ENCODE measurements at regions of chr2 and their contacts with region 1.

Region 1: DNA sequence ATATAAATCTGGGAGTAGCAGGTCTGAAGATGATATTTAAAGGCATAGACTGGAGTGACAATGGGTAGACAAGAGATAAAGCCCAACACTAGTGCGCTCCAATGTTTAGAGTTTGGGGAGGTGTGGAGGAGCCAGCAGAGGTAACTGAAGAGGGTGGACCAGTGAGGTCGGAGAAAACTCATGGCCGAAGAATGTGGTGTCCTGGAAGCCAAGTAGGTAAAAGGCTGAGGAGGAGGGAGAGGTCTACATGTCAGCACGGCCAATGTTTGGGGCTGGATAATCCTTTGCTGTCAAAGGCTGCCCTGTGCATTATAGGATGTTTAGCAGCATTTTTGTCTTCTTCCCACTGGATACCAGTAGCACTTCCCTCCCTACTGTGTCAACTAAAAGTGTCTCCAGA is 78.8 kb upstream of the KCNE4 start:
- DNase-seq: no peak
- ATAC-seq: no peak
- H3K4me3 ChIP-seq: no peak overlapping the region
- H3K4me1 ChIP-seq: no peaks in the 10 kb centered on the region
- CTCF ChIP-seq: no peak

Region 2: GRCh38 chr2:222844323-222844722 is 128.9 kb before region 1 on chr2:
- intact Hi-C with region 1: no loop called
- DNase-seq: peak in 1 of 3 donors; percentile 21
- ATAC-seq: peak; percentile 49
- H3K4me3 ChIP-seq: no peak overlapping the region
- H3K4me1 ChIP-seq: peaks cover 6% of the 10 kb centered on the region
- CTCF ChIP-seq: no peak

Region 3: GRCh38 chr2:223797811-223798721 is 824.8 kb after region 1 on chr2:
- intact Hi-C with region 1: loop called in 1 of 2 experiments (anchors 5 kb)
- DNase-seq: peak in 1 of 3 donors; percentile 23
- ATAC-seq: peak; percentile 16
- H3K4me3 ChIP-seq: no peak overlapping the region
- H3K4me1 ChIP-seq: no peaks in the 10 kb centered on the region
- CTCF ChIP-seq: no peak